ENCODE measurements at regions of chr5 and their contacts with region 1.

Region 1: GRCh38 chr5:143302341-143302740 is 101.1 kb downstream of the NR3C1 start:
- DNase-seq: no peak
- ATAC-seq: no peak
- H3K4me3 ChIP-seq: no peak overlapping the region
- H3K4me3 Mint-ChIP-seq: no peak overlapping the region
- H3K27ac ChIP-seq: no peak overlapping the region
- H3K27ac Mint-ChIP-seq: peak overlapping the region in 2 of 9 donors; percentile 23 to 27
- H3K4me1 ChIP-seq: peaks cover 0 to 3% of the 10 kb centered on the region in 2 donors
- H3K4me1 Mint-ChIP-seq: peaks cover 9 to 35% (median 28%) of the 10 kb centered on the region in 7 donors
- H3K27me3 ChIP-seq: no peaks in the 10 kb centered on the region
- H3K27me3 Mint-ChIP-seq: no peaks in the 10 kb centered on the region

Region 2: GRCh38 chr5:141478321-141478945 is 1823.9 kb before region 1 on chr5:
- CTCF ChIA-PET with region 1: no interaction called
- POLR2A ChIA-PET with region 1: no interaction called
- intact Hi-C with region 1: no loop called
- DNase-seq: no peak
- ATAC-seq: no peak
- H3K4me3 ChIP-seq: no peak overlapping the region
- H3K4me3 Mint-ChIP-seq: peak overlapping the region in 4 of 10 donors; percentile 24 to 95 (median 92)
- H3K27ac ChIP-seq: no peak overlapping the region
- H3K27ac Mint-ChIP-seq: no peak overlapping the region
- H3K4me1 ChIP-seq: peaks cover 5 to 13% of the 10 kb centered on the region in 2 donors
- H3K4me1 Mint-ChIP-seq: peaks cover 16 to 34% (median 29%) of the 10 kb centered on the region in 7 donors
- H3K27me3 ChIP-seq: peaks cover 3 to 13% of the 10 kb centered on the region in 2 donors
- H3K27me3 Mint-ChIP-seq: peaks cover 71 to 81% (median 75%) of the 10 kb centered on the region in 5 donors

Region 3: GRCh38 chr5:143314659-143315058 is 12.3 kb after region 1 on chr5:
- CTCF ChIA-PET with region 1: no interaction called
- POLR2A ChIA-PET with region 1: no interaction called
- intact Hi-C with region 1: loop called in 1 of 2 experiments (anchors 2 kb)
- DNase-seq: no peak
- ATAC-seq: no peak
- H3K4me3 ChIP-seq: no peak overlapping the region
- H3K4me3 Mint-ChIP-seq: no peak overlapping the region
- H3K27ac ChIP-seq: no peak overlapping the region
- H3K27ac Mint-ChIP-seq: peak overlapping the region in 2 of 9 donors; percentile 40 to 59
- H3K4me1 ChIP-seq: no peaks in the 10 kb centered on the region
- H3K4me1 Mint-ChIP-seq: peaks cover 10 to 38% (median 26%) of the 10 kb centered on the region in 7 donors
- H3K27me3 ChIP-seq: no peaks in the 10 kb centered on the region
- H3K27me3 Mint-ChIP-seq: no peaks in the 10 kb centered on the region

Measured in naive thymus-derived CD4-positive, alpha-beta T cell (primary cell).